CD8-positive, alpha-beta T cell (primary cell): ENCODE measurements at regions of chr5 and their contacts with region 1.

Region 1: DNA sequence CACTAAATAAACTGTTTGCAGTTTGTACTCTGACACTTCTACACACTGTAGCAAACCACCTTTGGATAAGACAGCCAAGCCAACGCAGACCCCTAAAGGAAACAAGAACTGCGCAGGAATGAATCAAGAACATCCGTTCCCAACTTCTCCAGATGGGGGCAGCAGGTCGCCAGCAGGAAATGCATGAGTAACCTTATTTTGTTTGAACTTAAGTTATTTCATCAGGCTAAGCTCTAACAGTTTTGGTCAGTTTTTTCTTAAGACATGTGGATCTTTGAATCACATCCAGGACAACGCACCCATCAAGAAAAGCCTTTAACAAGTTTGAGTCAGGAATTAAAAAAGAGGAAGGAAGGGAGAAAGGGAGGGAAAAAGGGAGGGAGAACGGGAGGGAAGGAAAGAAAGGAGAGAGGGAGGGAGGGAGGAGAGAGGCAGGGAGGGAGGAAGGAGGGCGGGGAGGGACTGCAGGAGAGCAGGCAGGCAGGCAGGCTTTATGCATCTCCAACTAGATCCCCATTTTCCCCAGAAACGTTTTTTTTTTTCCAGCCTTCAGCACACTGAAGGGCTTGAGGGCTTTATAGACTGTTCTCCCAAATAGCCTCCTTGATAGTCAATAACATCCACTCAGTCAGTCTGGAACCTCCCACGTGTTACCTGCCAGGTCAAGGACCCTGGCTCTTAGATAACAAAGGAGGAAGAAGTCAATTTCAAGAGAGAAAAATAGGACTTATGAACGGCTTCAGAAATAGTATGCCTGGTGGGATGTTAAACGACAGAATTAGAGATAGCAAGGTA is 22.2 kb downstream of the BHMT start:
- DNase-seq: peak; percentile 30 to 76 (median 66)
- ATAC-seq: peak; percentile 81
- H3K4me3 ChIP-seq: peak overlapping the region in 1 of 2 experiments; percentile 40
- H3K4me3 Mint-ChIP-seq: peak overlapping the region; percentile 71
- H3K27ac ChIP-seq: no peak overlapping the region
- H3K27ac Mint-ChIP-seq: no peak overlapping the region
- H3K4me1 ChIP-seq: peaks cover 11% of the 10 kb centered on the region
- H3K4me1 Mint-ChIP-seq: peaks cover 8% of the 10 kb centered on the region
- H3K27me3 ChIP-seq: no peaks in the 10 kb centered on the region
- H3K27me3 Mint-ChIP-seq: no peaks in the 10 kb centered on the region
- CTCF ChIP-seq: peak; percentile 23

Region 2: GRCh38 chr5:78467752-78468357 is 666.0 kb before region 1 on chr5:
- CTCF ChIA-PET with region 1: no interaction called
- POLR2A ChIA-PET with region 1: no interaction called
- intact Hi-C with region 1: loop called in 1 of 2 experiments (anchors 1 kb)
- DNase-seq: peak in 2 of 9 experiments; percentile 4 to 23
- ATAC-seq: no peak
- H3K4me3 ChIP-seq: no peak overlapping the region
- H3K4me3 Mint-ChIP-seq: no peak overlapping the region
- H3K27ac ChIP-seq: no peak overlapping the region
- H3K27ac Mint-ChIP-seq: no peak overlapping the region
- H3K4me1 ChIP-seq: no peaks in the 10 kb centered on the region
- H3K4me1 Mint-ChIP-seq: no peaks in the 10 kb centered on the region
- H3K27me3 ChIP-seq: no peaks in the 10 kb centered on the region
- H3K27me3 Mint-ChIP-seq: no peaks in the 10 kb centered on the region
- CTCF ChIP-seq: peak; percentile 62

Region 3: GRCh38 chr5:78984439-78985115 is 149.3 kb before region 1 on chr5:
- CTCF ChIA-PET with region 1: interaction called, 20 read pairs
- POLR2A ChIA-PET with region 1: no interaction called
- intact Hi-C with region 1: loop called (anchors 1 kb)
- DNase-seq: peak; percentile 55 to 90 (median 75)
- ATAC-seq: peak; percentile 74
- H3K4me3 ChIP-seq: peak overlapping the region; percentile 54 to 68
- H3K4me3 Mint-ChIP-seq: peak overlapping the region; percentile 94
- H3K27ac ChIP-seq: peak overlapping the region; percentile 40 to 75
- H3K27ac Mint-ChIP-seq: peak overlapping the region; percentile 92
- H3K4me1 ChIP-seq: peaks cover 14% of the 10 kb centered on the region
- H3K4me1 Mint-ChIP-seq: peaks cover 28% of the 10 kb centered on the region
- H3K27me3 ChIP-seq: no peaks in the 10 kb centered on the region
- H3K27me3 Mint-ChIP-seq: no peaks in the 10 kb centered on the region
- CTCF ChIP-seq: no peak

Region 4: DNA sequence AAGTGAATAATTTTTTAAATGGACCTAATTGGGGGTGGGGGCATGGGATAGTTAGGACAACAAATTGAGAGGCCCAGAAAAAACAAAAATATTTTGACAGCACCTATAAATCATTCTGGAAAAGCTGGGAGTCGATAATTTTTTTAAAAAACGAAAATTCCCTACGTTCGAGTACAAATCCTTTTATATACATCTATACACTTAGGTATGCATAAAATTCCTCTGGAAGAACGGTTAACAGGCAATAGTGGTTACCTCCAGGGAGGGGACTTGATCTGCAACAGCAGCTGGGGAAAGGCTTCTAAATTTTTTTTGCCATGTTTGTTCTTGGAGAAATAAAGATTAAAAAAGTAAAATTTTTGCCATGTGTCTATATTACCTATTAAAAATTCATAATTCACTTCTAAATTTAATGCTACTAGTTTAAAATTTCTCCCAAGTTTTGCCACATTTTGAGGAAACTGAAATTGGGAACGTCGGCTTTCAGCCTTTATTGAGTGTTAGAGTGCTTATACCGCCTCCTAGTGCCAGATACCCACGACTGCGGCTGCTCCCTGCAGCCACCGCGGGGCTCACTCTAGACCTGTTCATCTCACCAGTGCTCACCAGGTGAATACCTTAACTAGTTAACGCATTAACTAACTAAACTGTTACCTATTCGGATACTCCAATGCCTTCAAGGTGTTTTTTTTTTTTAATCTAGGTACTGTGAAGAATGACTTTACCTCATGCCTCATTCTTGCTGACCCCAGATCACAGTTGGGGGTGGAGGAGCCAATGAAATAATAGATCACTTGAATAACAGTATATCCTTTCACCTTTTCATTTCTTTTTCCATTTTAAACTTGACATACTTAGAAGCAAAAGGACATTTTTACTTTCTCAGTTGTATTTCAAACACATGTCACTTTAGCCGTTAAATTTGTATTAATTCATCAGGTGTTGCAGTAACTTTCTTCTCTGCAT is 24.0 kb before region 1 on chr5:
- CTCF ChIA-PET with region 1: interaction called, 13 read pairs
- POLR2A ChIA-PET with region 1: no interaction called
- intact Hi-C with region 1: no loop called
- DNase-seq: peak in 6 of 9 experiments; percentile 1 to 52 (median 32)
- ATAC-seq: no peak
- H3K4me3 ChIP-seq: no peak overlapping the region
- H3K4me3 Mint-ChIP-seq: no peak overlapping the region
- H3K27ac ChIP-seq: no peak overlapping the region
- H3K27ac Mint-ChIP-seq: no peak overlapping the region
- H3K4me1 ChIP-seq: no peaks in the 10 kb centered on the region
- H3K4me1 Mint-ChIP-seq: peaks cover 2% of the 10 kb centered on the region
- H3K27me3 ChIP-seq: peaks cover 0 to 8% of the 10 kb centered on the region in 2 experiments
- H3K27me3 Mint-ChIP-seq: peaks cover 40% of the 10 kb centered on the region
- CTCF ChIP-seq: peak; percentile 69

Region 5: GRCh38 chr5:79235634-79236363 is 101.9 kb after region 1 on chr5 and contains the start of gene JMY:
- CTCF ChIA-PET with region 1: interaction called, 4 read pairs
- POLR2A ChIA-PET with region 1: no interaction called
- intact Hi-C with region 1: loop called in 1 of 2 experiments (anchors 2 kb)
- DNase-seq: peak; percentile 72 to 94 (median 85)
- ATAC-seq: peak; percentile 86
- H3K4me3 ChIP-seq: peak within 1 kb of the TSS; percentile 79 to 81
- H3K4me3 Mint-ChIP-seq: peak within 1 kb of the TSS; percentile 97
- H3K27ac ChIP-seq: peak within 1 kb of the TSS; percentile 91 to 98
- H3K27ac Mint-ChIP-seq: peak within 1 kb of the TSS; percentile 96
- H3K4me1 ChIP-seq: peaks cover 28% of the 10 kb centered on the region
- H3K4me1 Mint-ChIP-seq: peaks cover 34% of the 10 kb centered on the region
- H3K27me3 ChIP-seq: no peaks in the 10 kb centered on the region
- H3K27me3 Mint-ChIP-seq: no peaks in the 10 kb centered on the region
- CTCF ChIP-seq: no peak
- total RNA-seq, gene JMY: 104 TPM

Region 6: DNA sequence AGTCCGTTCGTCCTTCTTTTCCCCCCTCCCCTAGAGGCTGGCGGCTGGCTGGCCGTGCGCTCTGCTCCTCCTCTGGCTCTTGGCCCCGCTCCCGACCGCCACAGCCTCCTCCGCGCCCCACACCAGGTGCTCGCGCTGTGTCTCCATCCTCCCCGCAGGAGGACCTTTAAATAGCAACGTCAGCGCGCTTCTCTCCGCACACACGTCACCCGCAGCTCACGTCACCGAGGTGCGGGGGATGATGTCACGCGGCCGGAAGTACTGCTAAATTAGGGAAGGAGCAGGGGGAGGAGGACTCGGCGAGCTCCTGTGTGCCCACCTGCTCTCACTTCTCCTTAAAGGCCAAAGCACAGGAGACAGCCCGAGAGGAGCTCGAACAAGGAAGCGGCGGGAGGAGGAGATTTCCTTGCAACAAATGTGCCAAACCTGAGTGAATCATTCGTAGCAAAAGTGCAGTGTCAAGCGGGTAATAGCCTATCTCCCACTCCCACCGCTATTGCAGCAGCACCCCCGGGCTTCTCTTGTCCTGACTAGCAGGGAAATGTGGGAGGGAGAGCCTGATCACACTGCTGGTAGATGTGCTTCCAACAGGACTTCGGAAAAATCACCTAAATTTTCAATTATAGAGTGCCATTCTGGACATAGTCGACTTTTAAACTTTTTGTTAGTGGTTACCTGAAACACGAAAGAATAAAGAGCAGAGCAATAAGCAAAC is 380.7 kb after region 1 on chr5:
- CTCF ChIA-PET with region 1: no interaction called
- POLR2A ChIA-PET with region 1: no interaction called
- intact Hi-C with region 1: loop called in 1 of 2 experiments (anchors 10 kb)
- DNase-seq: peak; percentile 80 to 98 (median 92)
- ATAC-seq: peak; percentile 84
- H3K4me3 ChIP-seq: peak overlapping the region; percentile 62 to 73
- H3K4me3 Mint-ChIP-seq: peak overlapping the region; percentile 99
- H3K27ac ChIP-seq: peak overlapping the region; percentile 91 to 97
- H3K27ac Mint-ChIP-seq: peak overlapping the region; percentile 99
- H3K4me1 ChIP-seq: peaks cover 19% of the 10 kb centered on the region
- H3K4me1 Mint-ChIP-seq: peaks cover 42% of the 10 kb centered on the region
- H3K27me3 ChIP-seq: peaks cover 6 to 7% of the 10 kb centered on the region in 2 experiments
- H3K27me3 Mint-ChIP-seq: peaks cover 5% of the 10 kb centered on the region
- CTCF ChIP-seq: peak; percentile 13

Region 7: GRCh38 chr5:79857714-79858409 is 724.0 kb after region 1 on chr5:
- CTCF ChIA-PET with region 1: interaction called, 3 read pairs
- POLR2A ChIA-PET with region 1: no interaction called
- intact Hi-C with region 1: loop called (anchors 5 to 10 kb)
- DNase-seq: peak; percentile 56 to 85 (median 76)
- ATAC-seq: peak; percentile 58
- H3K4me3 ChIP-seq: no peak overlapping the region
- H3K4me3 Mint-ChIP-seq: no peak overlapping the region
- H3K27ac ChIP-seq: no peak overlapping the region
- H3K27ac Mint-ChIP-seq: no peak overlapping the region
- H3K4me1 ChIP-seq: peaks cover 5% of the 10 kb centered on the region
- H3K4me1 Mint-ChIP-seq: peaks cover 2% of the 10 kb centered on the region
- H3K27me3 ChIP-seq: no peaks in the 10 kb centered on the region
- H3K27me3 Mint-ChIP-seq: peaks cover 2% of the 10 kb centered on the region
- CTCF ChIP-seq: peak; percentile 96